AG04450 (cell line): ENCODE measurements at regions of chr15 and their contacts with region 1.

Region 1: DNA sequence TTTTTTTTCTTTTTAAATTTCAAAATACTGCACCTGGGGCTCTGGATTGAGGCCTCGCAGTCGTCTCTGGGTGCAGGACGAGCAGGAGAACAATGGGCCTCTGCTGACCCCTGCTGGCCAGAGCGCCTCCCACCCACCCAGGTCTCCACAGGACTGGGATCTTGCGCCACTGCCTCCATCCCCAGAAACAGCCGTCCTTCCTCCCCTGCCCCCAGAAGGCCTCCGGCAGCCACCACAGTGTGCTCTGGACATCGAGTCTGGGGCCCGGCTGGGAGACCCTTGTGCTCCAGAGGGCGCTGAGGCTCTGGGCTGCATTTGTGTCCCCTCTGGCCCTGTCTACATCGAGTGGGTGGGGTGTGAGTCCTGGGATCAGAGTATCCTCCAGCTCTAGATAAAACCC is 6.6 kb upstream of the ACSBG1 start:
- DNase-seq: peak; percentile 33
- H3K4me3 ChIP-seq: no peak overlapping the region
- H3K27ac ChIP-seq: no peak overlapping the region
- H3K27me3 ChIP-seq: peaks cover 21% of the 10 kb centered on the region
- CTCF ChIP-seq: peak; percentile 89

Region 2: DNA sequence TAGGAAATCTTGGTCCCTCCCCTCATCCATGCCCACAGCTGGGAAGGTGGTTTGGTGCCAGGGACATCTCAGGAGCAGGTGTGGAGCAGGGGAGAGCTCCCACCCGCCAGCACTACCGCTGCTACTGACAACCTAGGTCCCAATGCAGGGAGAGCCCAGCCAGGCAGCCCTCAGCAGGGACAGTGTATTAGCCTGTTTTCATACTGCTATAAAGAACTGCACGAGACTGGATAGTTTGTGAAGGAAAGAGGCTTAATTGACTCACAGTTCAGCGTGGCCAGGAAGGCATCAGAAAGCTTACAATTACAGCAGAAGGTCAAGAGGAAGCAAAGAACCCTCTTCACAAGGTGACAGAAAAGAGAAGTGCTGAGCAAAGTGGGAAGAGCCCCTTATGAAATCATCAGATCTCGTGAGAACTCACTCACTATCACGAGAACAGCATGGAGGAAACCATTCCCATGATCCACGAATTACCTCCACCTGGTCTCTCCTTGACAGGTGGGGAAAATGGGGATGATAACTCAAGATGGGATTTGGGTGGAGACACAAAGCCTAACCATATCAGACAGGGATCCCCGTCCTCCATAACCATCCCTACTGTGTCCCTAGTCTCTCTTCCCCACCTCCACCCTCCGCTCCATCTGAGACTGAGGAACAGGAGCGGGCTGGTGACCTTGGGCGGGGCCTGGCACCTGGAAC is 382.1 kb before region 1 on chr15:
- CTCF ChIA-PET with region 1: no interaction called
- POLR2A ChIA-PET with region 1: no interaction called
- DNase-seq: no peak
- H3K4me3 ChIP-seq: no peak overlapping the region
- H3K27ac ChIP-seq: no peak overlapping the region
- H3K27me3 ChIP-seq: peaks cover 50% of the 10 kb centered on the region
- CTCF ChIP-seq: no peak

Region 3: DNA sequence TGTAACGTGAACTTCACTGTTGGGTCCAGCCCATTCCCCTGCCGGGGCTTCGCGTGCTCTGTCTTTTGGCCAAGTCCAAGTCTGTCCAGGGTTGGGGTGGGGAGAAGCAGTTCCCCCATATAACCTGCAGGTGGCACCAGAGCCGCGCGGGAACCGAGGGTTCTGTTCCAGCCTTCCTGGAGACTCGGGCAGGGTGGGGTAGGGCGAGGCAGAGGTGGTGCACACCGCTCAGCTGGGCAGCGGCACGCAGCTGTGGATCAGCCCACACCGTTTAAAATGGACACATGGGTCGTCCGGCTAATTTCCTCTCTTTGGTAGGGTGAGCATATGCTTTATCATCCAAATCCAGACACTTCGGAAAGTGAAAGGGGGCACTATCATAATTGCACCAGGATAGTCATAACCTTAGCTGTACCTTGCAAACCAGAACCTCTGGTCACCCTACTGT is 281.6 kb before region 1 on chr15:
- CTCF ChIA-PET with region 1: interaction called, 28 read pairs
- POLR2A ChIA-PET with region 1: no interaction called
- DNase-seq: peak; percentile 20
- H3K4me3 ChIP-seq: peak overlapping the region; percentile 36
- H3K27ac ChIP-seq: no peak overlapping the region
- H3K27me3 ChIP-seq: peaks cover 53% of the 10 kb centered on the region
- CTCF ChIP-seq: peak; percentile 96

Region 4: GRCh38 chr15:77966540-77967290 is 274.3 kb before region 1 on chr15:
- CTCF ChIA-PET with region 1: interaction called, 30 read pairs
- POLR2A ChIA-PET with region 1: interaction called, 4 read pairs
- DNase-seq: peak; percentile 11
- H3K4me3 ChIP-seq: no peak overlapping the region
- H3K27ac ChIP-seq: no peak overlapping the region
- H3K27me3 ChIP-seq: peaks cover 18% of the 10 kb centered on the region
- CTCF ChIP-seq: peak; percentile 94

Region 5: GRCh38 chr15:78120523-78120922 is 120.5 kb before region 1 on chr15:
- CTCF ChIA-PET with region 1: interaction called, 25 read pairs
- POLR2A ChIA-PET with region 1: no interaction called
- DNase-seq: no peak
- H3K4me3 ChIP-seq: no peak overlapping the region
- H3K27ac ChIP-seq: no peak overlapping the region
- H3K27me3 ChIP-seq: peaks cover 22% of the 10 kb centered on the region
- CTCF ChIP-seq: no peak

Region 6: DNA sequence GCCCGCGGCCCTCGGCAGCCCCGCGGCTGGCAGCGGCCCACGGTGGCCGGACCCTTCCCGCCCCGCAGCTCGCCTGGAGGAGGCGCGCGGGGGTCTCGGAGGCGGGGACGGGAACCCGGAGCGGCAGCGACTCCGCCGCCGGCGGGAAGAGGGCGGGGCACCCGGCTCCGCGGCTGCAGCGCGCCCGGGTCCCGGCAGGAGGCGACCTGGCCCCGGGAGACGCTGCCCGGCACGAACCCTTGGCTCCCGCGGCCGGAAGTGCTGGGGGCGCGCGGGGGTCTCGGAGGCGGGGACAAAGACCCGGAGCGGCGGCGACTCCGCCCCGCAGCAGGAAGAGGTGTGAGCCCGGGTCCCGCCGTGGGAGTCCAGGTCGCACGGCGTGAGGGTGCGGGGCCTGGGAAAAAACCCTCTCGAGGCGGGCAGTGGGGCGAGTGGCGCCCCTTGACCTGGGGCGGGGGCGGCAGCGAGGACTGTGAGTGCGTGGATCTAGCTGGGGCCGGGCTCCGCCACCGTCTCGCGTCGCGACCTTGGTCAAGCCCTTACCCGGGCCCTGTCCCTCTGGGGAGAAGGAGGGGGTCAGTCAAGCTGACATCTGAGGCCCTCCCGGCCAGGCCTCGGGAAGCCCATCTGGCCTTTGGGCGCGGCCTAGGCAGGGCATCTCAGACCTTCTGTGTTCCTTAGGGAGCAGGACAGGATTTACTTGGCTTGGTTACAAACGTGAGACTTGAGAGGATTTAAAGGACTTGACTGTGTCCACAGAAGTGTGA is 109.5 kb before region 1 on chr15 and contains the start of gene CIB2:
- CTCF ChIA-PET with region 1: interaction called, 30 read pairs
- POLR2A ChIA-PET with region 1: no interaction called
- DNase-seq: peak; percentile 7
- H3K4me3 ChIP-seq: peak within 1 kb of the TSS; percentile 74
- H3K27ac ChIP-seq: no peak within 1 kb of the TSS
- H3K27me3 ChIP-seq: no peaks in the 10 kb centered on the region
- CTCF ChIP-seq: peak; percentile 48
- polyA plus RNA-seq, gene CIB2: 2.7 and 3.7 TPM in 2 replicates

Region 7: DNA sequence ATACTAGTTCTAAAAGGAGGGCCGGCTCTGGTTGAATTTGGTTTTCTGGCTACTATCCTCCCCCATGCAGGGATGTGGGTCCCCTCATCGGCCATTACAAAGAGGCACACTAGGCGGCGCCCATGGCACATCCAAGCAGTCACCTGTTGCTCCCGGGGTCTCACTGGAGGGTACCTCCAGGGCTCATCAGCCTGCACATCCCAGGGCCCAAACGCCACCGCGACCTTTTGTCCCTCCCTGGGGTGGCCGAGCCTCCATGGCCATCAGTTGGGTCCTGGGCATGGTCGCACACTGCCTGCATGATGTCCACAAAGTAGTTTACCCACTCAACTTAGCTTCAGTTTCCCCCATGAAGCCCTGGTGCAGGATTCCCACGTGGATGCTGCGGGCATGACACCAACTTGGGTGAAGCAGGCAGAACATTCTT is 63.5 kb before region 1 on chr15:
- CTCF ChIA-PET with region 1: interaction called, 59 read pairs
- POLR2A ChIA-PET with region 1: no interaction called
- DNase-seq: no peak
- H3K4me3 ChIP-seq: no peak overlapping the region
- H3K27ac ChIP-seq: no peak overlapping the region
- H3K27me3 ChIP-seq: peaks cover 4% of the 10 kb centered on the region
- CTCF ChIP-seq: peak; percentile 63

Region 8: DNA sequence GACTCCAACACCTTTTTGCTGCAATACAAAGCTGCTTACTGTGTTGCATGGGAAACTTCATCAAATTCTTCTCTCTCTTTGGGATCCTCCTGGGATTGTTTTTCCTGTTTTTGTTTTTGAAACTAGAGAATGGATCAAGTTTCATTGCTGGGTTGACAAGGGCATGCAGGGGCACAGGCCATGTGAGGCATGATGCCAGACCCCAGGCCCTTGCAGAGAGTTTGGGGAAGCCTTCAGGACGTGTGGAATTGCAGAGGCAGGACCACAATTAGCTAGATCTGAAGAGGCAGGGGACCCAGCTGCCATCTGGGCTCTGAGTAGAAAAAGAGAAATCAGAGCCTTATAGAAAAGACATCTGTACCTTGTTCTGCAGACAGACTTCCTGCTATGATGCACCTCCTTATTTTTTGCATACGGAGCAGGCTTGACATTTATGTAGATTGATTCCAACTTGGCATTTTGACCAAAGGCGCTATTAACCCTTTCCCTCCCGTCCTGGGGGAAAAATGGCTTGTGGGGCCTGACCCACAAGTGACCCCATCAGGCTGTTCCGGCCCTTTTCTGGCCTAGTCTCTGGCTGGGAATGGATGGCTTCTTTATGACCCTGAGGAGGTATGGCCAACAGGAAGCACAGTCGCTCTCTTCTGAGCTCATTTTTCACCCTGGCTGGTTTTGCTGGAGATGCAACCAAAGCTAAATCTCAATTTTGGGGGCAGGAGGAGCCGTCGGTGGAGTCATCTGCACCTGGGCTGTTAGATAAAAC is 444.3 kb after region 1 on chr15:
- CTCF ChIA-PET with region 1: no interaction called
- POLR2A ChIA-PET with region 1: no interaction called
- DNase-seq: no peak
- H3K4me3 ChIP-seq: no peak overlapping the region
- H3K27ac ChIP-seq: no peak overlapping the region
- H3K27me3 ChIP-seq: peaks cover 2% of the 10 kb centered on the region
- CTCF ChIP-seq: no peak